ENCODE measurements at regions of chr1 and their contacts with region 1.

Region 1: GRCh38 chr1:155017041-155017945 is 14.7 kb downstream of the ZBTB7B start:
- DNase-seq: peak; percentile 81 to 93 (median 84)
- H3K4me3 ChIP-seq: peak overlapping the region; percentile 27 to 70 (median 59)
- H3K27ac ChIP-seq: peak overlapping the region; percentile 35 to 99 (median 90)
- H3K27me3 ChIP-seq: no peaks in the 10 kb centered on the region
- CTCF ChIP-seq: peak; percentile 82 to 100 (median 99)

Region 2: DNA sequence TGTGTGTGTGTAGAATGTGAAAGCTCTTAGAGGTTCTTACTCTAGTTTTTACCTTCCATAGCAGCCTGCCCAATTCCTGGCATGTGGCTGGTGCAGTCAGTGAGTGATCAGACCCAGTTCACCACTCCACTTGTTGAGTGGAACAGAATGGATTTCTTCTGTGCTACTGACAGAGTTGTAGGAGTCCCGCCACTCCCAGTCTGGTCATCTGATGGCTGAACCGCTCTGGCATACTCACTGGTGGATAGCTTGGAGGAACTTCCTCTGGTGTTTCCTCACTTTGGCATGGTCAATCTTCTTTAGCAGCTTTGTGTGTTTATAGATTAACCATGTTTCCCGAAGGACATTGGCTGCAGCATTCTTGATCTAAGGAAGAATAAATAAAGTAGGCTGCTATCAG is 302.7 kb before region 1 on chr1:
- intact Hi-C with region 1: no loop called
- DNase-seq: no peak
- H3K4me3 ChIP-seq: no peak overlapping the region
- H3K27ac ChIP-seq: no peak overlapping the region
- H3K27me3 ChIP-seq: no peaks in the 10 kb centered on the region
- CTCF ChIP-seq: no peak

Region 3: DNA sequence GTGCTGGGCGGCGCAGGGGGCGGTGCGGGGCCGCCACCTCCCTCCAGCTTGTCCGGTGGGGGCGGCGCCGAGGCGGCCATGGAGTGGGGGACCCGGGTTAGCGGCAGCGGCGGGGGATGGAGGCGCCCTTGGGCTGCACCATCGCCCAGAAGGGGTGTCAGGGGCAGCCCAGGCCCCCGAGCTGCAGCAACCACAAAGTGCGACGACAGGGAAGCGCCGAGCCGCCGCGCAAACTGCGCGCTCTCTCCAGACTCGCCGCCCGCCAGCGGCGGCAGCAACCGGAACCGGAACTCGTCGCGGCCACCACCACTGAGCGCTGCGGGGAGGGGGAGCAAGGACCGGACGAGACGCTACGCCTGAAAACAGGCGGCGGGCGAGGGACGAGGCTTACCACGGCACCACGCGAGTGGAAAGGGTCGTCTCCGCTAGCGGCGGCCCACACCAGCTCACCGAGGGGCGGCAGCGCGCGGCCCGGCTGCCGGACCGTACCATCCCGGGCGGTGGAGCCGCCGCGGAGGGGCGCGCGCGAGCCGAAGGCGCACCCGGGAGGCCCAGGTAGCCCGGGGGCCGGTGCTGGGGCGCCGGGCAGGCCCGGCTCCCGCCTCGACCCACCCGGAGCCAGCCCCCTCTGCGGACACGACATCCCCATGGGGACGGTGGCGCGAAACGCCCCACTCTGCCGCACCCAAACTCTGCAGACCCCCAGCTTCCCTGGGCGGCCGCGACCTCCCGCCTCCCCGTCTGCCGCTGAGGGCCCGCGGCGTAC is 55.6 kb before region 1 on chr1 and contains the start of gene PYGO2:
- intact Hi-C with region 1: loop called (anchors 5 kb)
- DNase-seq: peak in 9 of 10 donors; percentile 62 to 87 (median 72)
- H3K4me3 ChIP-seq: peak within 1 kb of the TSS; percentile 66 to 99 (median 92)
- H3K27ac ChIP-seq: peak within 1 kb of the TSS; percentile 80 to 100 (median 99)
- H3K27me3 ChIP-seq: no peaks in the 10 kb centered on the region
- CTCF ChIP-seq: peak in 55 of 56 donors; percentile 20 to 93 (median 72)
- total RNA-seq, gene PYGO2: 26.9 to 46.0 (median 33.8) TPM

Region 4: GRCh38 chr1:154982897-154983648 is 34.2 kb before region 1 on chr1 and contains the start of gene FLAD1:
- intact Hi-C with region 1: no loop called
- DNase-seq: peak; percentile 89 to 99 (median 96)
- H3K4me3 ChIP-seq: peak within 1 kb of the TSS; percentile 61 to 99 (median 84)
- H3K27ac ChIP-seq: peak within 1 kb of the TSS in 51 of 59 donors; percentile 8 to 92 (median 78)
- H3K27me3 ChIP-seq: no peaks in the 10 kb centered on the region
- CTCF ChIP-seq: peak in 25 of 56 donors; percentile 4 to 50 (median 24)
- total RNA-seq, gene FLAD1: 16.1 to 42.6 (median 25.5) TPM

Region 5: GRCh38 chr1:155050560-155051341 is 33.5 kb after region 1 on chr1 and contains the start of gene ADAM15:
- intact Hi-C with region 1: loop called in 1 of 2 experiments (anchors 5 kb)
- DNase-seq: peak; percentile 58 to 88 (median 70)
- H3K4me3 ChIP-seq: peak within 1 kb of the TSS; percentile 53 to 96 (median 81)
- H3K27ac ChIP-seq: peak within 1 kb of the TSS; percentile 51 to 98 (median 89)
- H3K27me3 ChIP-seq: no peaks in the 10 kb centered on the region
- CTCF ChIP-seq: peak; percentile 54 to 94 (median 84)
- total RNA-seq, gene ADAM15: 32.1 to 108 (median 62.7) TPM

Region 6: DNA sequence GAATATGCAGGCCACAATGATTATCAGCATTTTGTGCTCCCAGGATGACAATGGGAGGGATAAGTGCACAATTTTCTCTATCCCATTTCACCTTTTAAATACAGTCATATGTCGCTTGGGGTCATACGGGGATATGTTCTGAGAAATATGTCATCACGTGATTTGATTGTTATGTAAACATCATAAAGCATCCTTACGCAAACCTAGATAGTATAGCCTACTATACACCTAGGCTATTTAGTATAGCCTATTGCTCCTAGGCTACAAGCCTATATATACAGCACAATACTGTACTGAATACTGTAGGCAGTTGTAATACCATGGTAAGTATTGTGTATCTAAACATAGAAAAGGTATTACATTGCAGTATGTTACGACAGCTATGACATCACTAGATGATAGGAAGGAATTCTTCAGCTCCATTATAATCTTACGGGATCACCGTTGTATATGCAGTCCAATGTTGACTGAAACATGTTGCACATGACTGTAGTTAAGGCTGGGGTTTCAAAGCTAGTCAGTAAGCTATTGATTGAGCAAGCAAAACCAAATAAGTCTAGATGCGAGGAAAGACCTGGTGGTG is 322.3 kb after region 1 on chr1:
- intact Hi-C with region 1: no loop called
- DNase-seq: no peak
- H3K4me3 ChIP-seq: no peak overlapping the region
- H3K27ac ChIP-seq: peak overlapping the region in 3 of 59 donors; percentile 1 to 11 (median 7)
- H3K27me3 ChIP-seq: no peaks in the 10 kb centered on the region
- CTCF ChIP-seq: no peak

Measured in dorsolateral prefrontal cortex (tissue), 120 donors.